HepG2 (cell line): ENCODE measurements at regions of chr12 and their contacts with region 1.

Region 1: GRCh38 chr12:131850856-131851559 is 22.8 kb downstream of the MMP17 start:
- DNase-seq: no peak
- ATAC-seq: peak; percentile 83
- H3K4me3 ChIP-seq: peak overlapping the region in 1 of 3 experiments; percentile 43; a peak in 1 of 6 replicates
- H3K27ac ChIP-seq: no peak overlapping the region
- H3K4me1 ChIP-seq: peaks cover 39% of the 10 kb centered on the region
- H3K27me3 ChIP-seq: peaks cover 11 to 28% of the 10 kb centered on the region in 2 experiments
- CTCF ChIP-seq: peak; percentile 97
- EP300 ChIP-seq: no peak
- POLR2A ChIP-seq: no peak
- RAD21 ChIP-seq: peak; percentile 95

Region 2: GRCh38 chr12:131912518-131913294 is 61.7 kb after region 1 on chr12:
- CTCF ChIA-PET with region 1: no interaction called
- POLR2A ChIA-PET with region 1: no interaction called
- in situ Hi-C with region 1: no loop called
- intact Hi-C with region 1: loop called (anchors 5 kb)
- DNase-seq: peak; percentile 24
- ATAC-seq: peak; percentile 56
- H3K4me3 ChIP-seq: no peak overlapping the region
- H3K27ac ChIP-seq: no peak overlapping the region
- H3K4me1 ChIP-seq: peaks cover 11% of the 10 kb centered on the region; the same call in 1 of the 2 replicates
- H3K27me3 ChIP-seq: no peaks in the 10 kb centered on the region
- CTCF ChIP-seq: peak; percentile 51
- EP300 ChIP-seq: no peak
- POLR2A ChIP-seq: no peak
- RAD21 ChIP-seq: peak; percentile 44; the same call in 1 of the 2 replicates

Region 3: GRCh38 chr12:132003846-132004245 is 152.8 kb after region 1 on chr12:
- CTCF ChIA-PET with region 1: interaction called, 3 read pairs
- POLR2A ChIA-PET with region 1: no interaction called
- in situ Hi-C with region 1: no loop called
- intact Hi-C with region 1: loop called (anchors 5 kb)
- DNase-seq: no peak
- ATAC-seq: no peak
- H3K4me3 ChIP-seq: no peak overlapping the region
- H3K27ac ChIP-seq: no peak overlapping the region
- H3K4me1 ChIP-seq: no peaks in the 10 kb centered on the region
- H3K27me3 ChIP-seq: no peaks in the 10 kb centered on the region; a peak in 1 of 5 replicates
- CTCF ChIP-seq: no peak
- EP300 ChIP-seq: no peak
- POLR2A ChIP-seq: no peak
- RAD21 ChIP-seq: no peak